Mammary epithelial cell (primary cell): ENCODE measurements at regions of chrX and their contacts with region 1.

Region 1: DNA sequence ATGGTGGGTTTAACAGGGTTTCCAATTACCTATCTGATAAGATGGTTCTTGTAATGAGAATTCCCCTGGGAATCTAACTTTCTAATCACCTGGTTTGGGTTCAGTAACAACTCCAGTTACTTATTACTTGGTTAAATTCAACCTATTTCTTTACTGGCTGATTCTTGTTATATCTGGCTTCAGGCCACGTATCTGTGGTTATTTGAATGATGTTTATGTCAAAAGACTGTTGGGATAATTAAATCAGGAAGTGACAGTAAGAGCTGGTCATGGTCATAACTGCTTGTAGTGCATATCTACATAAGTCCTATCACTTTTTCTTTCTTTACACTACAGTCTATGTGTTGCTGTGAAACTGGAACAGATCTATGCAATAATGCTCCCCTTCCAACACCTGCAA is 108.1 kb downstream of the MID1 start:
- DNase-seq: peak; percentile 57
- H3K4me3 ChIP-seq: no peak overlapping the region
- H3K27ac ChIP-seq: no peak overlapping the region
- H3K4me1 ChIP-seq: peaks cover 17% of the 10 kb centered on the region
- H3K27me3 ChIP-seq: no peaks in the 10 kb centered on the region
- CTCF ChIP-seq: no peak

Region 2: GRCh38 chrX:10469900-10470408 is 42.3 kb before region 1 on chrX:
- CTCF ChIA-PET with region 1: no interaction called
- dilution Hi-C with region 1: no loop called
- in situ Hi-C with region 1: no loop called
- intact Hi-C with region 1: no loop called
- DNase-seq: no peak
- H3K4me3 ChIP-seq: no peak overlapping the region
- H3K27ac ChIP-seq: no peak overlapping the region
- H3K4me1 ChIP-seq: no peaks in the 10 kb centered on the region
- H3K27me3 ChIP-seq: no peaks in the 10 kb centered on the region
- CTCF ChIP-seq: no peak

Region 3: DNA sequence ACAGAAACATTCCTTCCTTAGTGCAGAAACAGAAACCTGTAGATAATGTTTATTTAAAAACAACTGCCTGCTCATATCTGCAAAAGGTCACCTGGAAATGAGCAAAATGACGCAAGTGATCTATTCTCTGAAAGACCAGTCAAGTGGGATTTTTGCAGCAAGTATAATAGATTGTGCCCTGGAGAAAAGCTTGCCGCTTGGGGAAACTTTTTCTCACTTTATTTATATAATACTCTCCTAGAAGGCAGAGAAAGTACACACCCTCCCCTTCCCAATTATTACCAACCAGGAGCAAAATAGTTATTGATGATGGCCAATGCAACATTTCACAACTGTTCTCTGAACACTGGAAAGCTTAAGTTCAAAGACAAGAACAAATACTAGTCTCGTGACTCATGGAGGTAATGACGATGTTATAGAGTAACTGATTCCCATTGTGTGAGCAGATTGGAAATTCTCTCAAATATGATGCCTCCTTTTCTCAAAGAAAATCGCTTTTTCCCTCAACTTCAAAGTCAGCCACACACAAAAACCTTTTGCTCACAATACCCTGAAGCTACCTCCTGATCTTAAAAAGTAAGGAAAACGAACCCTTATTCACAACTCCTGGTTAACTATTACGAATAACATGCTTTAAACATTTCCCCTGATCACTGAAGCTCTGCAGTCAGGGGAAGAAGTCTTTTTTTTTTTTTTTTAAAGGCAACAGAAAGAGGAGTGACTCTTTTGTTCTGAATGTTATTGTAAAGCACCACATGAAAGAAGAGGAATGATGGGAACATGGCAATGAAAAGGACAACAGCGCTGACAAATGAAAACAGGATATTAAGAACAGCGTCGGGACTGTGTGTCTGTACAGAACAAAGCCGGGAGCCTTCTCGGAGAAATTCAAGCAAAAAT is 67.1 kb after region 1 on chrX:
- CTCF ChIA-PET with region 1: no interaction called
- dilution Hi-C with region 1: loop called (anchors 5 kb)
- in situ Hi-C with region 1: no loop called
- intact Hi-C with region 1: no loop called
- DNase-seq: peak; percentile 69
- H3K4me3 ChIP-seq: peak overlapping the region in 2 of 3 experiments; percentile 35 to 42
- H3K27ac ChIP-seq: peak overlapping the region; percentile 96
- H3K4me1 ChIP-seq: peaks cover 14% of the 10 kb centered on the region
- H3K27me3 ChIP-seq: no peaks in the 10 kb centered on the region
- CTCF ChIP-seq: no peak